ENCODE measurements at regions of chr10 and their contacts with region 1.

Region 1: GRCh38 chr10:37976091-37976879 is at the start of gene ZNF25:
- DNase-seq: peak; percentile 100
- ATAC-seq: peak; percentile 94
- H3K4me3 ChIP-seq: peak within 1 kb of the TSS; percentile 83
- H3K27ac ChIP-seq: peak within 1 kb of the TSS; percentile 59
- H3K4me1 ChIP-seq: peaks cover 11% of the 10 kb centered on the region; the same call in 1 of the 2 replicates
- H3K27me3 ChIP-seq: no peaks in the 10 kb centered on the region
- CTCF ChIP-seq: peak; percentile 97
- total RNA-seq, gene ZNF25: 2.4 and 3.9 TPM in 2 replicates

Region 2: DNA sequence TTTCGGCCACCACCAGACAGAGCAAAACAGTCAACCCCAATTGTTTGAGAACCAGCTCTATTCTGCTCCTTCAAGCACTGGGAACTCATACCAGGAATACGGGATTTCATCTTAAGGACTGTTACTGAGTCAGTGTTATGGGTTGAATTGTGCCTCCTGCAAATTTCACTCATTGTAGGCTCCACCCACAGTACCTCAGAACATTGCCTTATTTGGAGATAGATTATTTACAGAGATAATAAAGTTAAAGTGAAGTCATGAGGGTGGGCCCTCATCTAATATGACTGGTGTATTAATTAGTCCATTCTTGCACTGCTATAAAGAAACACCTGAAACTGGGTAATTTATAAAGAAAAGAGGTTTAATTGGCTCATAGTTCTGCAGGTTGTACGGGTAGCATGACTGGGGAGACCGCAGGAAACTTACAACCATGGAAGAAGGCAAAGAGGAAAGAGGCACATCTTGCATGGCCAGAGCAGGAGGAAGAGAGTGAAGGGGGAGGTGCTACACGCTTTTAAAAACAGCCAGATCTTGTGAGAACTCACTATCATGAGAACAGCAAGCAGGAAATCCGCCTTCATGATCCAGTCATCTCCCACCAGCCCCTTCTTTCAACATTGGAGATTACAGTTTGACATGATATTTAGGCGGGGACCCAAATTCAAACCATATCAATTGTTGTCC is 104.6 kb before region 1 on chr10:
- CTCF ChIA-PET with region 1: no interaction called
- POLR2A ChIA-PET with region 1: no interaction called
- intact Hi-C with region 1: no loop called
- DNase-seq: no peak
- ATAC-seq: no peak
- H3K4me3 ChIP-seq: no peak overlapping the region
- H3K27ac ChIP-seq: no peak overlapping the region
- H3K4me1 ChIP-seq: no peaks in the 10 kb centered on the region
- H3K27me3 ChIP-seq: no peaks in the 10 kb centered on the region
- CTCF ChIP-seq: no peak

Region 3: GRCh38 chr10:38010119-38010903 is 34.0 kb after region 1 on chr10 and contains the start of gene ZNF33A:
- CTCF ChIA-PET with region 1: interaction called, 11 read pairs
- POLR2A ChIA-PET with region 1: interaction called, 4 read pairs
- intact Hi-C with region 1: loop called (anchors 1 kb)
- DNase-seq: peak; percentile 98
- ATAC-seq: peak; percentile 93
- H3K4me3 ChIP-seq: peak within 1 kb of the TSS; percentile 71
- H3K27ac ChIP-seq: peak within 1 kb of the TSS; percentile 89
- H3K4me1 ChIP-seq: peaks cover 18% of the 10 kb centered on the region
- H3K27me3 ChIP-seq: no peaks in the 10 kb centered on the region
- CTCF ChIP-seq: no peak; the same call in 1 of the 2 replicates
- total RNA-seq, gene ZNF33A: 18.0 and 21.1 TPM in 2 replicates

Region 4: GRCh38 chr10:38025283-38025682 is 49.0 kb after region 1 on chr10:
- CTCF ChIA-PET with region 1: no interaction called
- POLR2A ChIA-PET with region 1: interaction called, 19 read pairs
- intact Hi-C with region 1: no loop called
- DNase-seq: no peak
- ATAC-seq: no peak
- H3K4me3 ChIP-seq: no peak overlapping the region
- H3K27ac ChIP-seq: no peak overlapping the region
- H3K4me1 ChIP-seq: peaks cover 4% of the 10 kb centered on the region
- H3K27me3 ChIP-seq: no peaks in the 10 kb centered on the region
- CTCF ChIP-seq: no peak

Region 5: GRCh38 chr10:38043516-38043915 is 67.2 kb after region 1 on chr10:
- CTCF ChIA-PET with region 1: no interaction called
- POLR2A ChIA-PET with region 1: no interaction called
- intact Hi-C with region 1: no loop called
- DNase-seq: no peak
- ATAC-seq: no peak
- H3K4me3 ChIP-seq: no peak overlapping the region
- H3K27ac ChIP-seq: no peak overlapping the region
- H3K4me1 ChIP-seq: no peaks in the 10 kb centered on the region
- H3K27me3 ChIP-seq: no peaks in the 10 kb centered on the region
- CTCF ChIP-seq: no peak

Region 6: GRCh38 chr10:38054361-38054797 is 78.1 kb after region 1 on chr10:
- CTCF ChIA-PET with region 1: no interaction called
- POLR2A ChIA-PET with region 1: interaction called, 4 read pairs
- intact Hi-C with region 1: loop called (anchors 10 kb)
- DNase-seq: no peak
- ATAC-seq: no peak
- H3K4me3 ChIP-seq: no peak overlapping the region; the same call in 1 of the 2 replicates
- H3K27ac ChIP-seq: no peak overlapping the region
- H3K4me1 ChIP-seq: no peaks in the 10 kb centered on the region
- H3K27me3 ChIP-seq: no peaks in the 10 kb centered on the region
- CTCF ChIP-seq: no peak

Region 7: DNA sequence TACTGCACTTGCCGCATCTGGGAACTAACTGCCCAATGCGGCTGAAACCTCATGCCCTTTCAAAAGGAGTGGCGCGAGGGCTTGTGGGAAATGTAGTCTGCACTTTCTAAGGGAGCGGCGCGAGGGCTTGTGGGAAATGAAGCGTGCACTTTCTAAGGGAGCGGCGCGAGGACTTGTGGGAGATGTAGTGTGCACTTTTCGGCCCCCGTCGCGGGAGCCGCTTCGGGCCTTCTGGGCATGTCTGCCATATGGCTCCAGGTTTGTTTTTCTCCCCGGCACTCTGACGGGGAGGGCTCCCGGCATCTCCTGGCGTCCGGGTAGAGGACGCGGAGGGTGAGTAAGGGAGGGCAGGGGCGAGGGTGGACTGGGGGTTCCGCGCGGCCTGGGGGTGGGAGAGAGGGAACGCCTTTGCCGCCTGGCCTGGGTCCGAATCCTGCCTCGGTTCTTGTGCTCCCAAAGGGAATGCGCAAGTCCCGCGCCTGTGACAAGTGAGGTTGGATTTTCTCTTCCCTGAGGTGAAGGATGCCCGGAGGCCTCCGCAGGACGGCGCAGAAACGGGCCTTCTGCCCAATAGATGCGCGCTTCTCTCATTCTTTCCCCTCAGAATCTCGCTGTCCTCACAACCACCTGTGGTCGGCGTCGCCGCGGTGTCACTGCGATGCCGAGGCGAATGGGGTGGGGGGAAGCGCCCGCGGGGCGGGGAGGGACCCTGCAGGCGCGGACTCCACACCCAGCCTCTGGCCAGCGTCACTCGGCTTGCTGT is 118.1 kb after region 1 on chr10 and contains the start of gene ZNF37A:
- CTCF ChIA-PET with region 1: no interaction called
- POLR2A ChIA-PET with region 1: interaction called, 6 read pairs
- intact Hi-C with region 1: loop called (anchors 1 kb)
- DNase-seq: peak; percentile 98
- ATAC-seq: peak; percentile 98
- H3K4me3 ChIP-seq: peak within 1 kb of the TSS; percentile 91
- H3K27ac ChIP-seq: no peak within 1 kb of the TSS; the same call in 1 of the 2 replicates
- H3K4me1 ChIP-seq: peaks cover 13% of the 10 kb centered on the region
- H3K27me3 ChIP-seq: no peaks in the 10 kb centered on the region
- CTCF ChIP-seq: no peak
- total RNA-seq, gene ZNF37A: 19.7 and 25.7 TPM in 2 replicates

Measured in PC-3 (cell line).